A673 (cell line): ENCODE measurements at regions of chr17 and their contacts with region 1.

Region 1: GRCh38 chr17:42039794-42040763 is 10.3 kb downstream of the C17orf113 start:
- DNase-seq: no peak
- H3K4me3 ChIP-seq: no peak overlapping the region
- H3K27ac ChIP-seq: no peak overlapping the region
- H3K4me1 ChIP-seq: no peaks in the 10 kb centered on the region
- H3K27me3 ChIP-seq: no peaks in the 10 kb centered on the region
- CTCF ChIP-seq: no peak

Region 2: GRCh38 chr17:41705271-41705991 is 334.6 kb before region 1 on chr17:
- CTCF ChIA-PET with region 1: no interaction called
- POLR2A ChIA-PET with region 1: no interaction called
- intact Hi-C with region 1: no loop called
- DNase-seq: no peak
- H3K4me3 ChIP-seq: no peak overlapping the region
- H3K27ac ChIP-seq: no peak overlapping the region
- H3K4me1 ChIP-seq: no peaks in the 10 kb centered on the region
- H3K27me3 ChIP-seq: no peaks in the 10 kb centered on the region
- CTCF ChIP-seq: no peak

Region 3: GRCh38 chr17:42019509-42020404 is 20.3 kb before region 1 on chr17 and contains the start of gene NKIRAS2:
- CTCF ChIA-PET with region 1: interaction called, 15 read pairs
- POLR2A ChIA-PET with region 1: no interaction called
- intact Hi-C with region 1: no loop called
- DNase-seq: peak; percentile 87
- H3K4me3 ChIP-seq: peak within 1 kb of the TSS; percentile 82
- H3K27ac ChIP-seq: peak within 1 kb of the TSS; percentile 84
- H3K4me1 ChIP-seq: no peaks in the 10 kb centered on the region
- H3K27me3 ChIP-seq: no peaks in the 10 kb centered on the region
- CTCF ChIP-seq: peak; percentile 75
- total RNA-seq, gene NKIRAS2: 25.4 and 28.7 TPM in 2 replicates